Right ventricle myocardium inferior (tissue), 1 donor: ENCODE measurements at regions of chr11 and their contacts with region 1.

Region 1: DNA sequence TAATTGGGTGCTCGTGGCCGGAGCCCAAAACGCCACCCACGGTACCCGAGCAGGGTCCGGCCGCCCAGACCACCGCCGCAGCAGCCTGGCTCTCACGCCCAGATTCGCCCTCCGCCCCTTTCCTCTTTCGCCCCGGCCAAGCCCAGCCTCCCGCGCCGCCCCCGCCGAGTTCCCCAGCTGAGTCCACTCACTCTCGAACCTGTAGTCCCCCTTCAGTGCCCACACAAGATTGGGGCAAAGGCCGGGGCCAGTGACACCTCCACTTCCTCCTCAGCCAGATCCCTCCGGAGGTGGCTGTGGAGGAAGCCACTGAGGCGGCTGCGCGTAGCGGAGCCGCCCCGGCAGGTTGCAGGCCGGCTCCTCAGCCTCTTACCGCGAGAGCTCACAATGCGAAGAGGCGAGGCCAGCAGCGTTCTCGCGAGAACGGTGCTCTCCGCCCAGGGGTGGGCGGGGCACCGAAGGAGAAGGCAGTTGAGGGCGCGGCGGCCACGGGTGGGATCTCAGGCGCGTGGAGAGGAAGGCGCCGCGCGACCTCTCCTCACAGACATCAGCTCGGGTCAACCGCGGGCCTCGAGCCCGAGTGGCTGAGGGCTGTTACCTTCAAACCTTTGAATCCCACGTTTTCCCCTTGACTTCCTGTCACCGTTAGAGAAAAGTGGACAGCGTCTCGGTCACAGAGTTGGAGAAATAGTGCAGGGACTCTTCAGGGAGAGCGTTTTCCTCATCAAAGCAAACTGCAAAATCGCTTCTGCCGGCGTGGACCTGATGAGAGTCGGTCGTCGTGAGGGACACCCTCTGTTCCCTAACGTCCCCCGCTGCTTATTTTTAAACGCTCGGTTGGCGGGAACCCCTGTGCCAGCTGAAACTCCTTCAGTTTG is at the start of gene BTBD10:
- DNase-seq: peak; percentile 98
- ATAC-seq: peak; percentile 99
- total RNA-seq, gene BTBD10: 19.3 TPM

Region 2: GRCh38 chr11:13384908-13385640 is 78.1 kb before region 1 on chr11:
- intact Hi-C with region 1: loop called (anchors 10 kb)
- DNase-seq: no peak
- ATAC-seq: no peak

Region 3: GRCh38 chr11:13669544-13670488 is 206.7 kb after region 1 on chr11:
- intact Hi-C with region 1: loop called (anchors 2 kb)
- DNase-seq: peak; percentile 30
- ATAC-seq: no peak